GM13977 (cell line): ENCODE measurements at regions of chr5 and their contacts with region 1.

Region 1: GRCh38 chr5:154603978-154604679 is 126.1 kb upstream of the HAND1 start:
- DNase-seq: no peak
- CTCF ChIP-seq: no peak

Region 2: DNA sequence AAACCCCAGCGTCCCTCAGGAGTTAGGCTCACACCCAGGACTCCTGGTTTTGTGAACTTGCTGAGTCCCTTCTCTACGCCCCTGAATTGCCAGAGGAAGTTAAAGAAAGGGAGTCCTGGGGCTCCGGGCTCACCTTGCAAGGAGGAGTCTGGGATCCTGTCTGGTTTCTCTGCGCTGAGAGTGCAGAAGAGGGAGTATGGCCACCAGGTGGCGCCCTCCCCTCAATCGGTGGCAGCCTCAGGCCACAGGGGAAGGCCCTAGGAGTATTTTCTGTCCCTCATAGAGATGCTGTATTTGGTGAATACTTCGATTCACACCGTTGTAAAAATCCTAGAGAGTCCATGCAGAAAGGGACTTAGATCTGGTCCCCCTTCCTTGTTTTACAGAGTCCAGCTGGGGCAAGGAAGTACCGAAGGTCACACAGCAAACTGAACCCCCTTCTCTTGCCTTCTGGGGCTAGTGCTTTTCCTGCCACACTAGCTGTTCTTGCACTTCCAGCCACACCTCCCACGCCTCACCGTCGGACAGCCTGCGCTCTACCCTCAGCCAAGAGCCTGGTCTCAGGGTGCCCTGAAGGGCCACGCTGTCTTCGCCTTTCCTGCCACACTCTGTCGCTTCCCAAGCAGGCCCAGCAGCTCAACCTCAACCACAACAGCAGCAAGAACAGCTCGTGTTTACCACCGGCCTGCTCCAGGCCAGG is 136.3 kb before region 1 on chr5:
- in situ Hi-C with region 1: loop called (anchors 10 kb)
- DNase-seq: peak; percentile 86
- CTCF ChIP-seq: peak; percentile 87